B cell (primary cell): ENCODE measurements at regions of chr11 and their contacts with region 1.

Region 1: GRCh38 chr11:33893711-33894397 is 2.0 kb upstream of the LMO2 start:
- DNase-seq: peak; percentile 84
- ATAC-seq: peak; percentile 80
- H3K4me3 ChIP-seq: peak overlapping the region; percentile 43 to 74 (median 60)
- H3K4me3 Mint-ChIP-seq: peak overlapping the region; percentile 92
- H3K27ac ChIP-seq: peak overlapping the region; percentile 80 to 89
- H3K27ac Mint-ChIP-seq: peak overlapping the region; percentile 95
- H3K4me1 ChIP-seq: peaks cover 60 to 66% of the 10 kb centered on the region in 2 donors
- H3K4me1 Mint-ChIP-seq: peaks cover 70% of the 10 kb centered on the region
- H3K27me3 ChIP-seq: no peaks in the 10 kb centered on the region
- H3K27me3 Mint-ChIP-seq: no peaks in the 10 kb centered on the region
- CTCF ChIP-seq: no peak

Region 2: DNA sequence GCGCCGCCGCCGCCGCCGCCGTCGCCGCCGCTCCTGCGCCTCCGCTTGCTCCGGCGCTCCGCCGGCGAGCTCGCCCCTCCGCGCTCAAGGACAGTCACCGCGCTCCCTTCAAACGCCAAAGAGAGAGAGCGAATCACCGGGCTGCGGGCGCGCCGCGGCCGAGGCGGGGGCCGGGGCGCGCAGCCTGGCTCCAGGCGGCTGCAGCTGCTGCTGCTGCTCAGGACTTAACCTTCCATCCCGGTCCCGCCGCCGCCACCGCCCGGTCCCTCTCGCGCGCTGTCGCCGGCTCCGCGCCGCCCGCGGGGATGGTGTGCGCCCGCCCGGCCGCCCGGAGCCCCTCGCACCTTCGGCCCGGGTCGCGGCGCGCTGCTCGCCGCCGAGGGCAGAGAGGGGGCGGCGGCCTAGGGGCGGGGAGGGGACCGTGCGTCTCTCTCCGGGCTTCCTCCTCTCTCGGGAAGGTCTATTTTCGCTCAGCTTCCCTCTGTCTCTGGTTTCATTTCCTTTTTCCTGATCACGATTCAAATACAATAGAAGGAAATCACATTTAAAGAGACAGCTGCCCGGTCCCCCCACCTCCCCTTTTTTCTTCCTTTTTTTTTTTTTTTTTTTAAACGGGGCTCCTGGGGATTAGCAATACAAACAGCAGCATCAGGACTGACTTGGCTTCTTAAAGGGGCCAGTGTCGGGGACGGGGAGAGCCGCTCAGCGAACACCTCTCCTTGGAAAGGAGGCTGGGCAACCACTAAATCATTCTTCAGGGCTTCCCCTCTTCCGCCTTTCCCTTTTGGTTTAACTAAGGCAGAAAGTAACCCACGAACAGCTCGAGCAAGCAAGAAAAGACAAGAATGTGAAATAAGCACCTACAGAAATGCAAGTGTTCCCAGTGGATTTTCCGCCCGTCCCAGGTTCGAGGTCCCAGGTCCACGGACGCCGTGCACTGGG is 24.1 kb before region 1 on chr11:
- CTCF ChIA-PET with region 1: interaction called, 21 read pairs
- POLR2A ChIA-PET with region 1: interaction called, 11 read pairs
- intact Hi-C with region 1: loop called (anchors 1 kb)
- DNase-seq: peak; percentile 75
- ATAC-seq: peak; percentile 72
- H3K4me3 ChIP-seq: peak overlapping the region; percentile 64 to 86 (median 82)
- H3K4me3 Mint-ChIP-seq: peak overlapping the region; percentile 98
- H3K27ac ChIP-seq: no peak overlapping the region
- H3K27ac Mint-ChIP-seq: peak overlapping the region; percentile 83
- H3K4me1 ChIP-seq: peaks cover 26 to 30% of the 10 kb centered on the region in 2 donors
- H3K4me1 Mint-ChIP-seq: peaks cover 32% of the 10 kb centered on the region
- H3K27me3 ChIP-seq: peaks cover 0 to 7% (median 0%) of the 10 kb centered on the region in 4 experiments
- H3K27me3 Mint-ChIP-seq: peaks cover 3% of the 10 kb centered on the region
- CTCF ChIP-seq: no peak

Region 3: DNA sequence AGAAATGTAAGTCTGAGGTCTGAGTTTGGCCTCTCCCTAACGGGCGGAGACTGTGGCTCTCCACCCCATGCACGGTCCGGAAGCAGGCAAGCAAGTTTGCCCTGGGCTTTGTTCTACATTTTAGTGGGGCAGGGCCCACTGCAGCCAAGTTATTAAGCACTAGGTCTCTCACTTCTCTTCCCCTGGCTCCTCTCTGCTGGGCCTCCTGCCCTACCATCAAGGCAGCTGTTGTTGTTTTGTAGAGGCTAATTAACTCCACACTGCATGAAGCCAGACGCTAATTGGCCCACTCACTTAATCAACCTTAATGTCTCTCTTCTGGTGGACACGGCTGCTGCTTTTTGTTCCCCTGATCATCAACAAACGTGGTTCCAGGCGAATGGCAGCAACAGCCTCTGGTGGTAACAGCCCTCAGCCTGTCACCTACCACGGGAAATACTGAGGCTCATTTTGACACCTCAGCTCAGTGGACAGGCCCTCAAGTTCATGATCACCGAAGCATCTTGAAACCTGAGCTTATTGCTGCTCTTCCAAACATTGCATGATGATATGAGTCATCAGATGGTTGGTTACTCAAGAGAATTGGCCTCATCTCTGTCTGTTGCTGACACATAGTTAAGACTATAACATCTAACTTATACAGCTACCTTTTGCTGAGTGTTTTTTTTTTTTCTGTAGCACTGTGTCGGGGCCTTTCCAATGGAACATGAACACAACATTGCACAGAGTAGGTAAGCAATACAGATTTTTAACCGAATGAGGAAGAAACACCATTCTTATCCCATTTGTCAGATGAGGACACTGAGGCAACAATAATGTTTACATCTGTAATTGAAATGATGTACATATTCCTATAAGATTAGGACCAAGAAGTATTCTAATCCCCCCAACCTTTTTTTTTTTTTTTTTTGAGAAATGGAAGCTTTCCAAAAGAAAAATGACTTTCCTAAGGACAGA is 18.8 kb after region 1 on chr11:
- CTCF ChIA-PET with region 1: interaction called, 6 read pairs
- POLR2A ChIA-PET with region 1: interaction called, 3 read pairs
- intact Hi-C with region 1: loop called (anchors 2 kb)
- DNase-seq: peak; percentile 29
- ATAC-seq: peak; percentile 76
- H3K4me3 ChIP-seq: no peak overlapping the region
- H3K4me3 Mint-ChIP-seq: peak overlapping the region; percentile 29
- H3K27ac ChIP-seq: peak overlapping the region; percentile 2 to 49
- H3K27ac Mint-ChIP-seq: peak overlapping the region; percentile 82
- H3K4me1 ChIP-seq: peaks cover 14 to 15% of the 10 kb centered on the region in 2 donors
- H3K4me1 Mint-ChIP-seq: peaks cover 24% of the 10 kb centered on the region
- H3K27me3 ChIP-seq: peaks cover 0 to 14% (median 3%) of the 10 kb centered on the region in 4 experiments
- H3K27me3 Mint-ChIP-seq: peaks cover 27% of the 10 kb centered on the region
- CTCF ChIP-seq: no peak

Region 4: DNA sequence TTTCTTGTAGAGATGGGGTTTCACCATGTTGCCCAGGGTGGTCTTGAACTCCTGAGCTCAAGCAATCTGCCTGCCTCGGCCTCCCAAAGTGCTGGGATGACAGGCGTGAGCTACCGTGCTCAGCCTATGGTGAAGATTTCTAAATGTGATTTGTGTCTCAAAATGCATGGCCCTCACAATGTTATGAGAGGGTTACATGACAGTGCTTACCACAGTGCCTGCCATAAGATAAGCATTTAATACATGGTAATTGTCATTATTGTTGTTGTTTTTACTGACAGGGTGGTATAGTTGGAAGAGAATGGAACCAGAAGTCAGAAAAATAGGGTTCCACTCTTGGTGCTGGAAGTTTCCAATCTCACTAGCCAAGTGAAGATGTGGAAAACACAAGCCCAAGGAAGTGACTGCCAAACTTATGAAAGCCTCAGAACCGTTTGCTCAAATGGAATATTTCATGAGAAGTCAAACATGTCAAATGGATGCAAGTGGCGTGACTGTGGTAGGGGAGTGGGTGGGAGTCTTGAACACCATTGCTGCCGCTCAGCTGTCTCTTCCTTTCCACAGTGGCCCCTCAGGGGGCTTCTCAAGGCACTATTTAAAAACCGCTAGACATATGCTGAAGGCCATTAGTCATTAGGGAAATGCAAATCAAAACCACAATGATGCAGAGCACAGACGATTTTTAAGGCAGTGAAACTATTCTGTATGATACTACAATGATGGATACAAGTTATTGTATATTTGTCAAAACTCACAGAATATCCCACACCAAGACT is 27.2 kb after region 1 on chr11:
- CTCF ChIA-PET with region 1: no interaction called
- POLR2A ChIA-PET with region 1: no interaction called
- intact Hi-C with region 1: loop called (anchors 1 kb)
- DNase-seq: peak; percentile 74
- ATAC-seq: peak; percentile 93
- H3K4me3 ChIP-seq: no peak overlapping the region
- H3K4me3 Mint-ChIP-seq: peak overlapping the region; percentile 14
- H3K27ac ChIP-seq: no peak overlapping the region
- H3K27ac Mint-ChIP-seq: peak overlapping the region; percentile 7
- H3K4me1 ChIP-seq: peaks cover 10 to 14% of the 10 kb centered on the region in 2 donors
- H3K4me1 Mint-ChIP-seq: peaks cover 21% of the 10 kb centered on the region
- H3K27me3 ChIP-seq: peaks cover 0 to 46% (median 28%) of the 10 kb centered on the region in 4 experiments
- H3K27me3 Mint-ChIP-seq: peaks cover 60% of the 10 kb centered on the region
- CTCF ChIP-seq: no peak

Region 5: GRCh38 chr11:34313099-34313517 is 419.3 kb after region 1 on chr11:
- CTCF ChIA-PET with region 1: no interaction called
- POLR2A ChIA-PET with region 1: no interaction called
- intact Hi-C with region 1: no loop called
- DNase-seq: no peak
- ATAC-seq: peak; percentile 62
- H3K4me3 ChIP-seq: no peak overlapping the region
- H3K4me3 Mint-ChIP-seq: no peak overlapping the region
- H3K27ac ChIP-seq: no peak overlapping the region
- H3K27ac Mint-ChIP-seq: no peak overlapping the region
- H3K4me1 ChIP-seq: no peaks in the 10 kb centered on the region
- H3K4me1 Mint-ChIP-seq: peaks cover 5% of the 10 kb centered on the region
- H3K27me3 ChIP-seq: no peaks in the 10 kb centered on the region
- H3K27me3 Mint-ChIP-seq: no peaks in the 10 kb centered on the region
- CTCF ChIP-seq: no peak